ENCODE measurements at regions of chr5 and their contacts with region 1.

Region 1: GRCh38 chr5:173903396-173904140 is 15.4 kb downstream of the CPEB4 start:
- DNase-seq: no peak
- ATAC-seq: no peak
- H3K4me3 Mint-ChIP-seq: no peak overlapping the region
- H3K27ac Mint-ChIP-seq: no peak overlapping the region
- H3K4me1 Mint-ChIP-seq: peaks cover 7% of the 10 kb centered on the region
- H3K27me3 Mint-ChIP-seq: no peaks in the 10 kb centered on the region

Region 2: DNA sequence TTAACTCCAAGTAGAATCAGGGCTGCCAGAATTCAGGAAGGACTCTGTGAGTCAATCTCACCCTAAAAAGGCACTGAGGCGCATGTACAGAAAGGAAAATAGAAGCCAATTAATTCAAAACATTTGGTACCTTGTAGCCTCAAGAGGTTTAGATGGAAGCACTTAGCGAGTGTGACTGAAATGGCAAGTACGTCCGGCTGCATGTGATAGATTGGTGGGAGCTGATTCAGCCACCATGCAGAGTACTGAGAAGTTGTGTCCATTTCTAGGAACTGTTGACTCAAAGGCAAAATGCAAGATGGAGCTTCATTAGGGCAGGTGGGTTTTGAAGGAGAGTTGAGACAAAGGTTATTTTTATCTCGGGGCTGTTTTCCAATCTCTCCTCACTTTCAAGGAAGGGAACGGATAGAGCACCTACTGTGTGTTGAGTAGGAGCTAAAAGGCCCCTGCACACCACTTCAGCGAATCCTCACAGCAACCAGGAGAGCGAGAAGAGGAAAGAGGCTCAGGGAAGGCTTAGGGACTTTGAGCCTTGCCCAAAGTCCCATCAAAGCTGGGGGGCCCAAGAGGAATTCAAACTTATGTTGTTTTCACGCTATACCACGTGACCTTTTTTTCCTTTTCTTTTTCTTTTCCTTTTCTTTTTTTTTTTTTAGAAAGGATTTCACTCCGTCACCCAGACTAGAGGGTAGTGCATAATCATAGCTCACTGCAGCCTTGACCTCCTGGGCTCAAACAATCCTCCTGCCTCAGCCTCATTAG is 50.0 kb before region 1 on chr5:
- CTCF ChIA-PET with region 1: no interaction called
- POLR2A ChIA-PET with region 1: no interaction called
- DNase-seq: no peak
- ATAC-seq: no peak
- H3K4me3 Mint-ChIP-seq: no peak overlapping the region
- H3K27ac Mint-ChIP-seq: no peak overlapping the region
- H3K4me1 Mint-ChIP-seq: peaks cover 5% of the 10 kb centered on the region
- H3K27me3 Mint-ChIP-seq: peaks cover 2% of the 10 kb centered on the region

Region 3: GRCh38 chr5:173893192-173893561 is 10.4 kb before region 1 on chr5:
- CTCF ChIA-PET with region 1: interaction called, 10 read pairs
- POLR2A ChIA-PET with region 1: interaction called, 3 read pairs
- DNase-seq: no peak
- ATAC-seq: no peak
- H3K4me3 Mint-ChIP-seq: no peak overlapping the region
- H3K27ac Mint-ChIP-seq: no peak overlapping the region
- H3K4me1 Mint-ChIP-seq: peaks cover 36% of the 10 kb centered on the region
- H3K27me3 Mint-ChIP-seq: no peaks in the 10 kb centered on the region